ENCODE measurements at regions of chrX and their contacts with region 1.

Region 1: GRCh38 chrX:118459494-118459893 is 36.1 kb upstream of the DOCK11 start:
- DNase-seq: no peak
- H3K4me3 ChIP-seq: no peak overlapping the region
- H3K27ac ChIP-seq: no peak overlapping the region
- H3K4me1 ChIP-seq: no peaks in the 10 kb centered on the region
- H3K27me3 ChIP-seq: no peaks in the 10 kb centered on the region
- CTCF ChIP-seq: peak; percentile 45 to 67 (median 54)
- POLR2A ChIP-seq: no peak

Region 2: GRCh38 chrX:118271770-118272169 is 187.7 kb before region 1 on chrX:
- intact Hi-C with region 1: no loop called
- DNase-seq: no peak
- H3K4me3 ChIP-seq: no peak overlapping the region
- H3K27ac ChIP-seq: no peak overlapping the region
- H3K4me1 ChIP-seq: no peaks in the 10 kb centered on the region
- H3K27me3 ChIP-seq: no peaks in the 10 kb centered on the region
- CTCF ChIP-seq: no peak
- POLR2A ChIP-seq: no peak

Region 3: DNA sequence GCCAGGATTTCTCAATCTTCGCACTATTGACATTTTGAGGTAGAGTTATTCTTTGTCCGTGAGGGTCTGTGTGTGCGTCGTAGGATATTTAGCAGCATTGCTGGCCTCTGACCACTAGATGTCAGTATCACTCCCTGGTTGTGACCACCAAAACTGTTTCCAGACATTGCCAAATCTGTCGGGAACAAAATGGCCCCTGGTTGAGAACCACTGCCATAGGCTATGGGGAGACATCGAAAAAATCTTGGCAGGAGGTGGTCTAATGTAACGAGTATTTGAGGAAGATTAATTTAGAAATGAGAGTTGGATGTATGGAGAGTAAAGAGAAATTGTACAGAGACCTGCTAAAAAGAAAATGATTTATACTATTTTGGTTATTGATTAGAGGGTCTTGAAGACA is 144.5 kb after region 1 on chrX:
- intact Hi-C with region 1: loop called (anchors 5 kb)
- DNase-seq: peak; percentile 42 to 43
- H3K4me3 ChIP-seq: no peak overlapping the region
- H3K27ac ChIP-seq: peak overlapping the region; percentile 17 to 23
- H3K4me1 ChIP-seq: no peaks in the 10 kb centered on the region
- H3K27me3 ChIP-seq: no peaks in the 10 kb centered on the region
- CTCF ChIP-seq: peak; percentile 68 to 76 (median 69)
- POLR2A ChIP-seq: no peak

Measured in uterus (tissue), 4 donors.